HEK293T (cell line): ENCODE measurements at regions of chr1 and their contacts with region 1.

Region 1: GRCh38 chr1:173733912-173734311 is 19.1 kb downstream of the KLHL20 start:
- DNase-seq: no peak

Region 2: GRCh38 chr1:173715538-173715844 is 18.4 kb before region 1 on chr1:
- CTCF ChIA-PET with region 1: interaction called, 11 read pairs
- POLR2A ChIA-PET with region 1: interaction called, 9 read pairs
- DNase-seq: no peak

Region 3: DNA sequence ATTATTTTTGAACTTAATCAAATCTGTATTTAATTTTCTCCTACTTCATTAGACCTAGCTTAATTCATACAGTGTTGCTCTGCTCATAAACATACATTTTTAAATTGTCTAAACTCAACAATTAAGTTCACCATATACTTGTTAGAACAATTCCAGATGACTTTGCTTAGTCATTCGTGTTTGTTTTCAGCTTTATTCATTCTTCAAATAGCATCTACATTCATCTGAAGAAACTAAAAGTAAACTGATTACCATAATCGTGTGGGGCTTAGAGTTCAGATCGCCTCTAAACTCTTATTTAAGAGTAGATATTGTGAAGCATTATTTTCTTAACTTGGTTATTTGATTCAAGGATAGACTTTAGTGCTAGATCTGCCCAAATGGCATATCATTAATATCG is 15.2 kb after region 1 on chr1:
- CTCF ChIA-PET with region 1: no interaction called
- POLR2A ChIA-PET with region 1: no interaction called
- DNase-seq: no peak